ENCODE measurements at regions of chr1 and their contacts with region 1.

Region 1: DNA sequence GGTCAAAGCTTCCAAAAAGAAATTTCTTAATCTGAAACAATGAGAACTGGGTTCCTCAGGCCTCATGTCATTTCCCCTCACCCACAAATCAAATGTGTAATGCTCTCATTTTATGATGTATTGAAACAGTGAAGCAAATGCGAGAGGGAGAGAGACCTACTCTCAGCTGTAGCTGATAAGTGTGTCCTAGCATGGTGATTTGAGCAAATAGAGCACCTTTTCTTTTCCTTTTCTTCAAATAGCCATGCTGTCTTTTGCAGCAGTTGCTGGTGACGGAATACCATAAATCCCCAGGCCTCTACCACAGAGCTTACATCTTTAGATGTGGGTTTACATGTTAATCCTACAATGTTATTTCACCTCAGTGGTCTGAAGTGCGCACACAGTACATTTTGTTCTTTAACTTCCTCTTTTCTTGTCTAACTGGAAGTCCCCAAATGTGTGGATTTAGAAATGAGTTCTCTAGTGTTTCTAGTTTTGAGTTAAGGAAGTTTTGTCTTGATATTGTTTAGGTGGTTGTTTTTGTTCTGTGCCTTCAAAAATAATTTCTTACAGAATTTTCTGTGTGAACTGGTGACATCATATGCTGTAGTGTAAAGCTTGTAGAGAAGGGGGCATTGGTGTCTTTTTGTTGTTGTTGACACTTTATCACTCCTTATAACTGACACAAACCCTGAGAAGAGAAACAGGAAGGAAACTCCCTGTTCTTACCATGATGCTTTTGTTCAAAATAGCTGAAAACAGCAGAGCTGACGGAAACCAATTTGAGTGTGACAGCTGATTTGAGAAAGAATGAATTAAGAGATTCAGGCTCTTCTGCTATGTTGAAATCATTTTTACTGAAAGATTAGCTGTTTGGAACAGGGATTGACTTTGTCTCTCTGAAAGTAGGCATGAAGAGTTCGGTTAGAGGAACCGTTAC is 12.2 kb downstream of the SMAP2 start:
- DNase-seq: peak; percentile 83
- H3K4me3 Mint-ChIP-seq: peak overlapping the region; percentile 78
- H3K27ac Mint-ChIP-seq: peak overlapping the region; percentile 99
- H3K4me1 Mint-ChIP-seq: peaks cover 92% of the 10 kb centered on the region
- H3K27me3 Mint-ChIP-seq: no peaks in the 10 kb centered on the region

Region 2: GRCh38 chr1:40373338-40374283 is 12.1 kb before region 1 on chr1 and contains the start of gene SMAP2:
- CTCF ChIA-PET with region 1: interaction called, 44 read pairs
- POLR2A ChIA-PET with region 1: interaction called, 9 read pairs
- DNase-seq: peak; percentile 95
- H3K4me3 Mint-ChIP-seq: peak within 1 kb of the TSS; percentile 100
- H3K27ac Mint-ChIP-seq: peak within 1 kb of the TSS; percentile 98
- H3K4me1 Mint-ChIP-seq: peaks cover 44% of the 10 kb centered on the region
- H3K27me3 Mint-ChIP-seq: peaks cover 2% of the 10 kb centered on the region
- total RNA-seq, gene SMAP2: 115 to 140 TPM